Sigmoid colon (tissue), 7 donors: ENCODE measurements at regions of chr1 and their contacts with region 1.

Region 1: GRCh38 chr1:231357831-231358354 is 19.8 kb downstream of the SPRTN start:
- DNase-seq: peak; percentile 75
- H3K4me3 ChIP-seq: no peak overlapping the region
- H3K27ac ChIP-seq: peak overlapping the region in 3 of 4 donors; percentile 4 to 43 (median 33)
- H3K4me1 ChIP-seq: peaks cover 0 to 14% (median 8%) of the 10 kb centered on the region in 4 donors
- H3K27me3 ChIP-seq: no peaks in the 10 kb centered on the region
- CTCF ChIP-seq: peak; percentile 68 to 82 (median 71)
- EP300 ChIP-seq: no peak
- POLR2A ChIP-seq: no peak

Region 2: GRCh38 chr1:231590453-231591198 is 232.7 kb after region 1 on chr1:
- intact Hi-C with region 1: loop called (anchors 1 kb)
- DNase-seq: peak; percentile 73
- H3K4me3 ChIP-seq: no peak overlapping the region
- H3K27ac ChIP-seq: peak overlapping the region in 3 of 4 donors; percentile 41 to 69 (median 61)
- H3K4me1 ChIP-seq: peaks cover 0 to 23% (median 14%) of the 10 kb centered on the region in 4 donors
- H3K27me3 ChIP-seq: no peaks in the 10 kb centered on the region
- CTCF ChIP-seq: peak; percentile 56 to 73 (median 61)
- EP300 ChIP-seq: peak in 2 of 4 donors; percentile 9 to 62
- POLR2A ChIP-seq: no peak